Esophagus muscularis mucosa (tissue), 4 donors: ENCODE measurements at regions of chr12 and their contacts with region 1.

Region 1: DNA sequence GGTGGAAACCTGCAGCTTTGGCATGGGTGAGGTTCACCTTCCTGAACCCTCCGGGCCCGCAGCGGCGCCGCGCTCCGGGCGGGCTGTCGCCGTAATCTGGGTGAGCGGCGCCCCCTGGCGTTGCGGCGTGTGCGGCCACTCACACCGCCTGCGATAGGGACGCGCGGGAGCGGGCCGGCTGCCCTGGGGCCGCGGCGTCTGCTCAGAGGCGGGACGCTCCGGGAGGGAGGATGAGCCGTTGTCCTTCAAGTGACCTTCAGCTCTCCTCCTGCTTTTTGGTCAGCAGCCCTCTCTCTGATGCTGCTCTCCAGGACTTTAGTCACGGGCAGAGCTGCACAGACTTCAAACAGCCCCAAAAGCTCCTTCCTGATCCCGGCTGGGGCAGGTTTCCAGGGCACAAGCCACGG is 211.7 kb upstream of the FKBP4 start:
- DNase-seq: no peak
- H3K4me3 ChIP-seq: peak overlapping the region; percentile 15 to 46 (median 22)
- H3K27ac ChIP-seq: peak overlapping the region in 2 of 4 donors; percentile 53 to 64
- H3K4me1 ChIP-seq: peaks cover 6 to 29% (median 24%) of the 10 kb centered on the region in 4 donors
- H3K27me3 ChIP-seq: no peaks in the 10 kb centered on the region
- CTCF ChIP-seq: peak; percentile 89 to 96 (median 90)
- EP300 ChIP-seq: no peak
- POLR2A ChIP-seq: no peak

Region 2: DNA sequence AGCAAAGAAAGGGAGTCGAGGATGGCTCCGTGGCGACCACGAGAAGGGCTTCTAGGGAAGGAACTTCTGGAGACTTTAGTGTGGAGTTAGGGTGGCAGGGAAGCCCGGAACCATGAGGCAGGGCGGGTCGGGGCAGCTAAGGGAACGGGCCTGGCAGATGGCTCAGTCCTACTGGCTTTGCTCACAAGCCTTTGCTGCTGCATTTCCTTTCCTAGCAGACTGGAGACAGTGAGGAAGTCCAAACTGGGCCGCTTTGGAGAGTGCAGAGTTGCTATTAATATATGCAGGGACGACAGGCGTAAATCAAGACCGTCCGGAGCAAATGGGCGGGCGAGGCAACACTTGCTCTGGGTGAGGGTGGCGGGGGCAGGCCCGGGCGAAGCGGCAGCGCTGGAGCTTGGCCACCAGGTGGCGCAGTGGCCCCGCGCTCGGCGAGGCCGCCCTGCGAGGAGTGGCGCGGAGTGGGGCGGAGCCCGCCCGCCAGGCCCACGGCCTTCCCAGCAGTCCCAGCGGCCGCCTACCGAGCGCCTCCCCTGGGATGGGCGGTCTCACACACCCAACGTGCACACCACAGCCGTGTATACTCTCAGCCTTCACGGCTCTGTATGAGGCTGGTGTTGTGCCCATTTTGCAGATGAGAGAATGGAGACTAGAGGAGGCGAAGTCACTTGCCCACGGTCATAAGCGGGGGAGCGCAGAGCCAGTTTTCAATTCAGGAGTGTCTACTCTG is 787.1 kb before region 1 on chr12:
- intact Hi-C with region 1: loop called (anchors 5 kb)
- DNase-seq: peak; percentile 97
- H3K4me3 ChIP-seq: peak overlapping the region; percentile 56 to 73 (median 66)
- H3K27ac ChIP-seq: peak overlapping the region; percentile 77 to 87 (median 86)
- H3K4me1 ChIP-seq: peaks cover 37 to 51% (median 46%) of the 10 kb centered on the region in 4 donors
- H3K27me3 ChIP-seq: no peaks in the 10 kb centered on the region
- CTCF ChIP-seq: peak; percentile 98 to 100 (median 99)
- EP300 ChIP-seq: no peak
- POLR2A ChIP-seq: no peak

Region 3: GRCh38 chr12:2034633-2035430 is 548.3 kb before region 1 on chr12:
- intact Hi-C with region 1: loop called (anchors 5 kb)
- DNase-seq: peak; percentile 94
- H3K4me3 ChIP-seq: peak overlapping the region; percentile 42 to 49 (median 44)
- H3K27ac ChIP-seq: peak overlapping the region in 2 of 4 donors; percentile 52 to 53
- H3K4me1 ChIP-seq: peaks cover 18 to 37% (median 25%) of the 10 kb centered on the region in 4 donors
- H3K27me3 ChIP-seq: no peaks in the 10 kb centered on the region
- CTCF ChIP-seq: peak in 2 of 3 experiments; percentile 97
- EP300 ChIP-seq: no peak
- POLR2A ChIP-seq: no peak

Region 4: DNA sequence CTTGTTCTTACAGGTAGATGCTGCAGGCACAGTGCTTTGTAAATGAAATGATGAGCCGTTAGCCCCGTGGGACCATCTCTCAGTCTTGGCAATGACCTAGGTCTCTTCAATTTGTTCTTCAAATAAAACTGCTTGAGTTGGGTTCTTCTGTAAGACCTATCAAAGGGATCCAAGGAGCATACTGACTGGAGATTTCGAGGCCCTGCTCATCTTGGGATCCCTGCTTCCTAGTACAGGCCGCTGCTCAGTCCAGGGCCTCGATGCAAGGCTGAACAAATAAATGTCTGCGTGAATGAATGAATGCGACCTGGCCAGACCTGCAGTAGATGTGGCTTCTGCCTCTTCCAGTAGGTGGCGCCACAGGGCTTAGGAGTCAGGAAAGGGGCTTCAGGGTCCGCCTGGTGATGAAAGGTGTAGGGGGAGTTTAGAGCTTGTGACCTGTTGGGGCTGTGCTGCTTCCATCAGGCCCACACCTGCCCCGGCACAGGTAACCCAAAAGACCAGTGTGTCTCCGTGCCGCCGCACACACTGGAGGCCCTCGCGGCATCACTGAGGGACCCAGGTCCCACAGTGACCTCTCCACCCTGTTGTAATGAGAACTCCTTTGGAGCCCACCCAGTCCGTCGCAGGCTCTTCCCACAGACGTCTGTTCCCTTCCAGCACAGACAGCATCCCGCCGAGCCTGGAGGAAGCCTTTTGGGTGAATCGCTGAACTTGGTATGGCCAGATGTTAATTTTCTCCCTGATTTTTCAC is 525.9 kb before region 1 on chr12:
- intact Hi-C with region 1: loop called (anchors 5 kb)
- DNase-seq: no peak
- H3K4me3 ChIP-seq: peak overlapping the region; percentile 31 to 77 (median 54)
- H3K27ac ChIP-seq: peak overlapping the region; percentile 92 to 96 (median 95)
- H3K4me1 ChIP-seq: peaks cover 43 to 78% (median 65%) of the 10 kb centered on the region in 4 donors
- H3K27me3 ChIP-seq: no peaks in the 10 kb centered on the region
- CTCF ChIP-seq: peak; percentile 84 to 86 (median 86)
- EP300 ChIP-seq: no peak
- POLR2A ChIP-seq: no peak

Region 5: DNA sequence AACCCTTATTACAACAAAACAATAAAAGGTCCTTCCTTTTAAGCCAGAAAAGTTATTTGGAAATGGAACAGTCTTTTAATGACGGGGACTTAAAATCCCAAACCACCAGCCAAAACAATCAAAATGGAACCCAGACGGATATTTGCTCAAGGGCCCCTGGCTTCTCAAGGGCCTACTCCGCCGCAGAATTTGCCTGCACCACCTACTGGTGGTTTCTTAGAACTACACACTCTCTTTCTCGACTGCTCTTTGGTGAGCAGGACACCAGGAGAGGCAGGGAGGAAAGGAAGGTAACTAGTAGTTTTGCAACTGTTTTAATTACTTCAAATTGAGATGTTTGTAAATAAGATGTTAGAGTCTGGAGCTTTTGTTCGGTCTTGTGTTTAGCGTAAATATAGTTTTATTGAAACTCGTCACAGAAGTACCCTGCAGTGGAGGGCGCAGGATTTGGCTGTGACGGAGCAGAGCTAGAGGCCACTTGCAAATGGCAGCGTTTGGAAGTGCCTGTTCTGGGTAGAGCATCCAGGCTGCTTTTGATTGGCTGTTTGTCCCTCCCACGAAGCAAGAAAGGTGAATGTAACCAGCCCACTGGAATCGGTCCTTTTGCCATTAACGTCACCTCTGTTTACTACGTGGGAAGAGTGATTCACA is 291.8 kb before region 1 on chr12:
- intact Hi-C with region 1: loop called (anchors 10 kb)
- DNase-seq: no peak
- H3K4me3 ChIP-seq: no peak overlapping the region
- H3K27ac ChIP-seq: peak overlapping the region in 3 of 4 donors; percentile 13 to 52 (median 30)
- H3K4me1 ChIP-seq: peaks cover 74 to 92% (median 83%) of the 10 kb centered on the region in 4 donors
- H3K27me3 ChIP-seq: no peaks in the 10 kb centered on the region
- CTCF ChIP-seq: peak; percentile 55 to 74 (median 58)
- EP300 ChIP-seq: no peak
- POLR2A ChIP-seq: no peak

Region 6: DNA sequence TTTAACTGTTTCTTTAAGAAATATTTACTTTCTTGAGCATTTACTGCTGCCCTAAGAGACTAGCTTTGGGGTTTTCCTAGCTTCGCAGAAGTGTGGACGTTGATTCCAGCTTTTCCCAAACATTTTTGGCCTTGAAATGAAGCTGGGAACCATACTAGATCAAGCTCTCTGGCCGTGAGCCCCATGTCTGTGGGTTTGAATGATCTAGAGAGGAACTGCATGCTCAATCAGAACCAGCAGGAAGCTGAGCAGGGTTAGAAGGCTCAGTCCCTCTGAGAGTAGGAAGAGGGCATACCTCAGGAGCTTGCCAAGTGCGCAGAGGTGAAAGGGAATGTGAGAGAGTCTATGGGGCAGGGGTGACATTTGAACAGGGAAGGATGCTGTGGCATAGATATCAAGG is 238.2 kb before region 1 on chr12:
- intact Hi-C with region 1: no loop called
- DNase-seq: no peak
- H3K4me3 ChIP-seq: no peak overlapping the region
- H3K27ac ChIP-seq: peak overlapping the region; percentile 7 to 81 (median 44)
- H3K4me1 ChIP-seq: peaks cover 68 to 96% (median 93%) of the 10 kb centered on the region in 4 donors
- H3K27me3 ChIP-seq: no peaks in the 10 kb centered on the region
- CTCF ChIP-seq: no peak
- EP300 ChIP-seq: no peak
- POLR2A ChIP-seq: no peak

Region 7: GRCh38 chr12:2513141-2514037 is 69.7 kb before region 1 on chr12:
- intact Hi-C with region 1: no loop called
- DNase-seq: no peak
- H3K4me3 ChIP-seq: no peak overlapping the region
- H3K27ac ChIP-seq: no peak overlapping the region
- H3K4me1 ChIP-seq: peaks cover 0 to 4% (median 0%) of the 10 kb centered on the region in 4 donors
- H3K27me3 ChIP-seq: no peaks in the 10 kb centered on the region
- CTCF ChIP-seq: no peak
- EP300 ChIP-seq: no peak
- POLR2A ChIP-seq: no peak